ENCODE measurements at regions of chr4 and their contacts with region 1.

Region 1: DNA sequence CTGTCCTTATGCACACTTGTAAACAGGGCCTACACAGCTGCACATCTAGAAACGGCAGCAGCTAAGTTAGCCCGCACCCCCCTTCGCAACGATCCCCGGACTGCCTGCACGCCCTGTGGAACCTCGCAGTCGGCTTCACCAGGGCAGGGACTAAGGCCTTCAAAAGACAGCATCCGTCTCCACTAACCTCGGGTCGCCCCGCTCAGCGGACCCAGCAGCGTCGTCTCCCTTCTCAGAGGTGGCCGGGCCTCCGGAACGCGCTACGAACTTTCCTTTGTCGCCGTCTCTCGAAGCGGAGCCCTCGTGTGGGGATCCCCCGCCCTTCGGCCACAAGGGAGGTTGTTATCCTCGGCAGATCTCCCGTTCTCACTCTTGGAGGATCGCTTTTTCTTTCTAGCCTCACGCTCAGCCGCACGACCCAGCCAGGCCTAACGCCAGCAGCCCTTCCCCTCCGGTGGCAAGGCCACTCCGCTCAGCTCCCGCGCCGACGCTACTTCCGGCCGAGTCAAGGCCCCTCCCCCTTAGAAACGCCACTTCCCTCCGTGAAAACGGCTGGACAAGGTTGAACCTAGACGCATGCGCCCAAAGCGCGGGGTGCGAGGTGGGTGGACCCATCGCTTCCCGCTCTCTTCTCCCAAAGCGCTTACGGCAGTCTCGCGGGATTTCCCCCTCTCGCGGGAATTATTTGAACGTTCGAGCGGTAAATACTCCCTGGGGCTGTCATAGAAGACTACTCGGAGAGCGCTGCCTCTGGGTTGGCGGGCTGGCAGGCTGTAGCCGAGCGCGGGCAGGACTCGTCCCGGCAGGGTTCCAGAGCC is at the starts of genes DCAF16 and NCAPG:
- DNase-seq: peak; percentile 100
- H3K4me3 ChIP-seq: peak within 1 kb of the TSS; percentile 95
- H3K27ac ChIP-seq: peak within 1 kb of the TSS; percentile 92
- H3K4me1 ChIP-seq: peaks cover 30% of the 10 kb centered on the region
- H3K27me3 ChIP-seq: no peaks in the 10 kb centered on the region
- CTCF ChIP-seq: no peak
- total RNA-seq, gene DCAF16: 20.4 to 34.0 TPM
- total RNA-seq, gene NCAPG: 10.7 to 38.8 TPM

Region 2: DNA sequence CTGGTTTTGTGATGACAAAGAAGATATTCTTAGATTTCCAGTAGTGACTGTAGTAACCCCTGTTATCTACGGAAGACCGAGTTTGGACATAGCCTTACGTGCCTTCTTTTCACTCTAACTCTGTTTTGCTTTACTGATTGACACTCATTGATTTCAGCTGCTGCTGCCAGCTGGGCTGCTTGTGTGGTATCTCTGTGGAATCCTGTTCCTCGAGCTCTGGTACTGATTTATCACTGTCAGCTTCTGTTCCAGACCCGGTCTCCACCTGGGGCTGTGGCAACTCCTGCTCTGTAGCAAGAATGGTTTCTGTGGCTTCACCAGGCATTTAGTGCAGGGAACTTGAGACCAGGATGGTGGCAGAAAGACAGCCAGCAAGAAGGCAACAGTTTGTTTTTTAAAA is 258.0 kb before region 1 on chr4:
- intact Hi-C with region 1: loop called (anchors 10 kb)
- DNase-seq: no peak
- H3K4me3 ChIP-seq: no peak overlapping the region
- H3K27ac ChIP-seq: no peak overlapping the region
- H3K4me1 ChIP-seq: no peaks in the 10 kb centered on the region
- H3K27me3 ChIP-seq: no peaks in the 10 kb centered on the region
- CTCF ChIP-seq: no peak

Region 3: GRCh38 chr4:17614416-17615299 is 195.8 kb before region 1 on chr4 and contains the start of gene MED28:
- intact Hi-C with region 1: loop called (anchors 10 kb)
- DNase-seq: peak; percentile 97
- H3K4me3 ChIP-seq: peak within 1 kb of the TSS; percentile 82
- H3K27ac ChIP-seq: peak within 1 kb of the TSS; percentile 46
- H3K4me1 ChIP-seq: peaks cover 10% of the 10 kb centered on the region
- H3K27me3 ChIP-seq: no peaks in the 10 kb centered on the region
- CTCF ChIP-seq: no peak
- total RNA-seq, gene MED28: 36.7 to 48.1 TPM

Region 4: DNA sequence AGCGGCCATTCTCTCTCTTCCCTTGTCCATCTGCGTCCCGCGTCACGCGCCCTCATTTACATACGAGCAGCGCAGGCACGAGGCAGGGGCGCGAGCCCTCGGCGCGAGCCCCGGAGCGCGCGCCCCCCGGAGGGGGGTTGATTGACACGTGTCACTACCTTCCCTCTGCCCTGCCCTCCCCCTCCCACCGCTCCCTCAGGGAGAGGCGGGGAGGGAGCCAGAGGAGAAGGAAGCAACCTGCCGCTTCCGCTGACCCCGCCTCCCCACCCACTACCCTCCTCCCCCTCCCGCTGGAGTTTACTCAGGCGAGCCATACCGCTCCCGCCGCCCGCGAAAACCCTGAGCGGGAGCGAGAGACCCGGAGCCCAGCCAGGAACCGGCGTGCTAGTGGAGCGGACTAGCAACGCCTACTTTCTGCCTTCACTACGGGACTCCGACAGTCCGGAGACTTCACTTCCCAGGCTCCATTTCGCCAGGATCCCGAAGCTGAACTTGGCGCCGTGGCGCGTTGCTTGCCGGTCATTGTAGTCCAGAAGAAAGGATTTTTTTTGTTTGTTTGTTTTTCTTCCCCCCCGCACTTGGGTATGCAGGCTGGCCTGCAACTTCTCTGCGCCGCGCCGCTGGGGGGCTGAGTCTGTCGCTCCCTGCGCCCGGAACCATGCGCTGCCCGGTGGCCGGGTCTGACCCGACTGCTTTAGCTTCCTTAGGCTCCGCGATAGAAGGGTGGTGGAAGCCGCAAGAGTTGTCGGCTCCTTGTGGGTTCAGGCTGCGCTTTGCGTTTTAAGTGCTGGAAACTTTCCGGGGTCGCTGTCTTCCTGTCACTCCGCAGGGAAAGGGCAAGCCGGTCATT is 211.5 kb after region 1 on chr4 and contains the start of gene LCORL:
- intact Hi-C with region 1: loop called (anchors 5 kb)
- DNase-seq: peak; percentile 95
- H3K4me3 ChIP-seq: peak within 1 kb of the TSS; percentile 93
- H3K27ac ChIP-seq: peak within 1 kb of the TSS; percentile 98
- H3K4me1 ChIP-seq: peaks cover 9% of the 10 kb centered on the region
- H3K27me3 ChIP-seq: no peaks in the 10 kb centered on the region
- CTCF ChIP-seq: no peak
- total RNA-seq, gene LCORL: 16.5 to 20.7 TPM

Region 5: DNA sequence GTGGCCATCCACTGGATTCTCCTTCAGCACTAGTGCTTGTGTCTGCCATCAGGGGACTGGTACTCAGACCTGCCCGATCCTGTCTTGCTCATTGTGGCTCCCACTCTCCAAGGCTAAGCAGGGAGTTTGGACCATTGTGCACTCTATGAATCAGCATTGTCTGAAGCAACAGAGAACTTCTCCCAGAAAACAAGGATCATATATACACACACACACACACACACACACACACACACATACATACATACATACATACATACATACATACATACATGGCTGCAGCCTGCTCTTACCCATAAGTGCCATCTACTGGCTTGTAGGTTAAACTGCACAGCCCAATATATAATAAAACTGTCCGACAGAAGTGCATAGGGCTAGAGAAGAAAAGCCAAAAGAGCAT is 556.4 kb after region 1 on chr4:
- intact Hi-C with region 1: loop called (anchors 10 kb)
- DNase-seq: no peak
- H3K4me3 ChIP-seq: no peak overlapping the region
- H3K27ac ChIP-seq: no peak overlapping the region
- H3K4me1 ChIP-seq: no peaks in the 10 kb centered on the region
- H3K27me3 ChIP-seq: no peaks in the 10 kb centered on the region
- CTCF ChIP-seq: peak; percentile 33